Motor neuron (in vitro differentiated cells): ENCODE measurements at regions of chrX and their contacts with region 1.

Region 1: GRCh38 chrX:106791495-106791894 is 11.0 kb upstream of the TBC1D8B start:
- ATAC-seq: no peak
- H3K4me3 ChIP-seq: no peak overlapping the region
- H3K27ac ChIP-seq: no peak overlapping the region
- H3K4me1 ChIP-seq: no peaks in the 10 kb centered on the region

Region 2: GRCh38 chrX:106481341-106481740 is 310.2 kb before region 1 on chrX:
- in situ Hi-C with region 1: loop called in 1 of 9 experiments (anchors 25 kb)
- ATAC-seq: peak; percentile 40 to 99 (median 64)
- H3K4me3 ChIP-seq: no peak overlapping the region
- H3K27ac ChIP-seq: no peak overlapping the region
- H3K4me1 ChIP-seq: no peaks in the 10 kb centered on the region

Region 3: GRCh38 chrX:107025545-107025944 is 234.1 kb after region 1 on chrX:
- in situ Hi-C with region 1: no loop called
- ATAC-seq: peak in 5 of 8 experiments; percentile 28 to 58 (median 43)
- H3K4me3 ChIP-seq: no peak overlapping the region
- H3K27ac ChIP-seq: no peak overlapping the region
- H3K4me1 ChIP-seq: no peaks in the 10 kb centered on the region